Endothelial cell of umbilical vein (primary cell): ENCODE measurements at regions of chr19 and their contacts with region 1.

Region 1: GRCh38 chr19:47348819-47349795 is at the start of gene DHX34:
- DNase-seq: peak; percentile 100
- H3K4me3 ChIP-seq: peak within 1 kb of the TSS; percentile 44 to 55 (median 53)
- H3K27ac ChIP-seq: no peak within 1 kb of the TSS
- H3K4me1 ChIP-seq: peaks cover 6% of the 10 kb centered on the region
- H3K27me3 ChIP-seq: no peaks in the 10 kb centered on the region
- CTCF ChIP-seq: peak; percentile 99 to 100
- POLR2A ChIP-seq: peak; percentile 79
- total RNA-seq, gene DHX34: 15.8 and 20.7 TPM in 2 replicates

Region 2: GRCh38 chr19:47273313-47273977 is 75.7 kb before region 1 on chr19:
- CTCF ChIA-PET with region 1: interaction called, 5 read pairs
- POLR2A ChIA-PET with region 1: no interaction called
- dilution Hi-C with region 1: no loop called
- intact Hi-C with region 1: loop called (anchors 5 kb)
- DNase-seq: peak; percentile 91
- H3K4me3 ChIP-seq: peak overlapping the region; percentile 16 to 67 (median 64)
- H3K27ac ChIP-seq: peak overlapping the region; percentile 92
- H3K4me1 ChIP-seq: peaks cover 13% of the 10 kb centered on the region
- H3K27me3 ChIP-seq: no peaks in the 10 kb centered on the region
- CTCF ChIP-seq: no peak
- POLR2A ChIP-seq: peak; percentile 75

Region 3: GRCh38 chr19:47324502-47324901 is 24.6 kb before region 1 on chr19:
- CTCF ChIA-PET with region 1: interaction called, 13 read pairs
- POLR2A ChIA-PET with region 1: no interaction called
- dilution Hi-C with region 1: no loop called
- intact Hi-C with region 1: no loop called
- DNase-seq: peak; percentile 13
- H3K4me3 ChIP-seq: no peak overlapping the region
- H3K27ac ChIP-seq: no peak overlapping the region
- H3K4me1 ChIP-seq: peaks cover 7% of the 10 kb centered on the region
- H3K27me3 ChIP-seq: peaks cover 0 to 2% of the 10 kb centered on the region in 2 experiments
- CTCF ChIP-seq: no peak
- POLR2A ChIP-seq: no peak

Region 4: DNA sequence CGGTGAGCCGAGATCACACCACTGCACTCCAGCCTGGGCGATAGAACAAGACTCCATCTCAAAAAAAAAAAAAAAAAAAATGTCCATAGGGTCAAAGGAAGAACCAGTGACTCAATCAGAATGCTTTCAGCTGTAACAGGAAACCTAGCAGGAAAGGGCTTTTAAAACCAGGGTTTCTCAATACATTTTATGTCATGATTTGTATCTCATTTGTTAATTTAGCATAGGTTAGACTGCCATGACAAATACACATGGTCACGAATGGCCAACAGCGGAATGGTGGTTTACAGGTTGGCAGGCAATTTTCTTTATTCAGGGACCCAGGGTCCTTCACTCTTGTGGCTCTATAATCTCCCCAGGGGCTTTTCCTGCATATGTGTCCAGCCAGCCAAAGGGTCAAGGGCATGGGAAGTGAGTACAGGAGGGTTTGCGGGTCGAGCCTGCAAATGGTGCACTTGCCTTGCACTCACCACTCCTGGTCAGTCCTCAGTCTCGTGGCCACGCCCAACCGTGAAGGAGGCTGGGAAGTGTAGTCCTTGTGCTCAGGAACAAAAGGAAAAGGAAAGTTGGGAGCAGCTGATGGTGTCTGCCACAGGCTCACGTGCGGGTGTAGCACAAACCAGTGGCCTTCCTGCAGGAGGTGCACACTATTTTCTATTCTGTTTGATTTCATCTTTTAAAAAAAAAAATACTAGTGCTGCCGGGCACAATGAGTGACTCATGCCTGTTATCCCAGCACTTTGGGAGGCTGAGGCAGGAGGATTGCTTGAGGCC is 14.8 kb after region 1 on chr19:
- CTCF ChIA-PET with region 1: interaction called, 11 read pairs
- POLR2A ChIA-PET with region 1: no interaction called
- dilution Hi-C with region 1: no loop called
- intact Hi-C with region 1: loop called (anchors 1 kb)
- DNase-seq: peak; percentile 85
- H3K4me3 ChIP-seq: no peak overlapping the region
- H3K27ac ChIP-seq: peak overlapping the region; percentile 64
- H3K4me1 ChIP-seq: peaks cover 19% of the 10 kb centered on the region
- H3K27me3 ChIP-seq: no peaks in the 10 kb centered on the region
- CTCF ChIP-seq: no peak
- POLR2A ChIP-seq: no peak

Region 5: DNA sequence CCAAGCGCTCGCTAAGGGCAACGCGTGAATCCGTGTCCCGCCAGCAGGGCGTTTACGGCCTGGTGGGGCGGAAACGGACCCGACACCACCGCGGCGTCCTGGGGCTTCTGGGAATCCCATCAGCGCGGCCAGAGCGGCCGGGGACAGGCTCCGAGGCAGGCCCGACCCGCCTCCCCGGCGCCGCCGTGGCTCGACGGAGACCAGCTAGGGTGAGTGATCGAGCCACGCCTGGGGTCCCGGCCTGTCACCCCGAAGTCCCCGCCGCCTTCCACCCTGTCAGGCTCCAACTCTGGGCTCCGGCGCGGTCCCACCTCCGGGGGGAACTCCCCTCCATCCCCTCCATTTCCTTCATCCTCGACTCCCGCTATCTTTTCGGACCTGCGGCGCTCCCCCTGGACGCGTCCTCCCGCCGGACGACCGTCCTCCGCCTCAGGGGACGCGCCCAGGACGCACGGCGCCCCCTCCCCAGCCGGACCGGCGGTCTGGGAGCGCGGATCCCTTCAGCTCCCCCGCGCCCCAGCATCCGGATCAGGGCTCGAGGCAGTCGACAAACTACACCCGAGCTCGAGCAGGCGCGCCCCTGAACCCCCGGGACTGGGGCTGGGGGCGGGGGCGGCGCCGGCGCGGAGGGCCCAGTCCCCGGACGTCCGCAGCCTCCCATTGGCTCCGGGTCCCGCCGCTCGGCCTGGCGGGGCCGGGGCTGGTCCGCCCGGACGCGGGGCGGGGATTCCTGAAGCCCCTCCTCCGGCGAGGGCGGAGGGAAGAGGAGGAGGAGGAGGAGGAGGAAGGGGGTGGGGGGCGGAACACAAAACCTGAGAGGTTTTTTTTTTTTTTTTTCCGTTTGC is 259.2 kb after region 1 on chr19:
- CTCF ChIA-PET with region 1: no interaction called
- POLR2A ChIA-PET with region 1: no interaction called
- dilution Hi-C with region 1: no loop called
- intact Hi-C with region 1: loop called (anchors 5 kb)
- DNase-seq: peak; percentile 90
- H3K4me3 ChIP-seq: peak overlapping the region; percentile 67 to 92 (median 91)
- H3K27ac ChIP-seq: peak overlapping the region; percentile 90
- H3K4me1 ChIP-seq: peaks cover 25% of the 10 kb centered on the region
- H3K27me3 ChIP-seq: no peaks in the 10 kb centered on the region
- CTCF ChIP-seq: peak; percentile 22 to 46
- POLR2A ChIP-seq: peak; percentile 64